Transverse colon (tissue), 4 donors: ENCODE measurements at regions of chr4 and their contacts with region 1.

Region 1: GRCh38 chr4:112031712-112032328 is 113.4 kb upstream of the FAM241A start:
- DNase-seq: peak; percentile 16
- H3K4me3 ChIP-seq: no peak overlapping the region
- H3K27ac ChIP-seq: no peak overlapping the region
- H3K4me1 ChIP-seq: peaks cover 0 to 6% (median 0%) of the 10 kb centered on the region in 4 donors
- H3K27me3 ChIP-seq: peaks cover 12% of the 10 kb centered on the region
- CTCF ChIP-seq: peak; percentile 55 to 79 (median 64)
- EP300 ChIP-seq: no peak
- POLR2A ChIP-seq: no peak

Region 2: GRCh38 chr4:111631215-111631999 is 400.4 kb before region 1 on chr4:
- in situ Hi-C with region 1: loop called in 3 of 4 experiments (anchors 10 to 25 kb)
- intact Hi-C with region 1: no loop called
- DNase-seq: no peak
- H3K4me3 ChIP-seq: no peak overlapping the region
- H3K27ac ChIP-seq: no peak overlapping the region
- H3K4me1 ChIP-seq: no peaks in the 10 kb centered on the region
- H3K27me3 ChIP-seq: no peaks in the 10 kb centered on the region
- CTCF ChIP-seq: peak in 4 of 5 experiments; percentile 11 to 27 (median 22)
- EP300 ChIP-seq: no peak
- POLR2A ChIP-seq: no peak

Region 3: GRCh38 chr4:111937368-111937767 is 94.5 kb before region 1 on chr4:
- in situ Hi-C with region 1: loop called in 2 of 4 experiments (anchors 10 kb)
- intact Hi-C with region 1: no loop called
- DNase-seq: no peak
- H3K4me3 ChIP-seq: no peak overlapping the region
- H3K27ac ChIP-seq: no peak overlapping the region
- H3K4me1 ChIP-seq: no peaks in the 10 kb centered on the region
- H3K27me3 ChIP-seq: peaks cover 8% of the 10 kb centered on the region
- CTCF ChIP-seq: peak in 2 of 5 experiments; percentile 8 to 20
- EP300 ChIP-seq: no peak
- POLR2A ChIP-seq: no peak

Region 4: DNA sequence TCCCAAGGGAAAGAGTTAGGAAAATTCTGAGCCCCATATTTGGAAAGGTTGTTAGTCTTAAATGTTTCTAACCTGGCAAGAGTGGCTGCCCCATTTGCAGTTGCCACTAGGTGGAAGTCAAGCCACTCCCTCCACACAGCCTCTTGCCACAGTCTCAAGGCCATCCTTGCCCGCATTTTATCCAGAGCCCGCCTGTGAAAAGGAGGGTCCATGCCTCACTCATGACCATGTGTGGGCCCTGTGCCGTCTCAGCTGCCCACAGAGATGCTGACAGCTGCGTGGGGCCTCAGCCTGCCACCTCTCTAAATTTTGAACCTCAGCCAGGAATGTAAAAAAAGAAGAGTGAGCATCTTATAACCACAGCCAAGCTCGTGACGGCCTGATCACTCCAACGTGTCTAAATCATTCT is 88.0 kb before region 1 on chr4:
- in situ Hi-C with region 1: loop called in 2 of 4 experiments (anchors 10 kb)
- intact Hi-C with region 1: no loop called
- DNase-seq: peak; percentile 61
- H3K4me3 ChIP-seq: no peak overlapping the region
- H3K27ac ChIP-seq: no peak overlapping the region
- H3K4me1 ChIP-seq: no peaks in the 10 kb centered on the region
- H3K27me3 ChIP-seq: no peaks in the 10 kb centered on the region
- CTCF ChIP-seq: peak; percentile 53 to 80 (median 60)
- EP300 ChIP-seq: no peak
- POLR2A ChIP-seq: no peak

Region 5: DNA sequence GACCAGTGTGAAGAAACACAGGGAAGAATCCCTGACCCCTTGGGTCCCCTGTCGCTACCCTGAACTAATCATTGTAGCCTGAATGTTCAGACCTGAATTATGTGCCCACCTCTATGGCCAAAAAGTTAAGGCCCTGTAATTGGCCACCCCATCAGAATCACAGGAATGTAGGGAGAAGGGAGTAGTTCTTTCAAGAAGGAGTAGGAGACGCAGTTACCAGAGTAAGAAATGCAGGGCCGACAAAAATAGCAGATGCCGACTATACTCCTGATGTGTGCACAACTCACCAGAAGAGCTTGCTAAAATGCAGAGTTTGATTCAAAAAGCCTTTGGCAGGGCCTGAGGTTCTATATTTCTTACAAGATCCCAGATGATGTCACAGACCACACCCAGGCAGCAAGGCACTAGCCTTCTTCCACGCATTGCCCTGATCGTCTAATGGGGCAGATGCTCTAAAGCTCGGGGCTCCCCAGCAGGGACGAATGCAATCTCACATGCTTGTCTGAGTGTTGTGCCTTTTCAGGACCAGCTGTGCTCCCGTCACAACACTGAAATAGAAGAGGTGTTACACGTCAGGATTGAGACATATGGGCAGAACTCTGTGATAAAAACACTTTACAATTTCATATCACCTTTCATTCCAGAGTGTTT is 47.5 kb before region 1 on chr4:
- in situ Hi-C with region 1: no loop called
- intact Hi-C with region 1: no loop called
- DNase-seq: no peak
- H3K4me3 ChIP-seq: no peak overlapping the region
- H3K27ac ChIP-seq: no peak overlapping the region
- H3K4me1 ChIP-seq: peaks cover 0 to 9% (median 4%) of the 10 kb centered on the region in 4 donors
- H3K27me3 ChIP-seq: no peaks in the 10 kb centered on the region
- CTCF ChIP-seq: no peak
- EP300 ChIP-seq: no peak
- POLR2A ChIP-seq: no peak

Region 6: GRCh38 chr4:112007391-112007790 is 24.4 kb before region 1 on chr4:
- in situ Hi-C with region 1: no loop called
- intact Hi-C with region 1: no loop called
- DNase-seq: no peak
- H3K4me3 ChIP-seq: no peak overlapping the region
- H3K27ac ChIP-seq: no peak overlapping the region
- H3K4me1 ChIP-seq: peaks cover 0 to 3% (median 0%) of the 10 kb centered on the region in 4 donors
- H3K27me3 ChIP-seq: no peaks in the 10 kb centered on the region
- CTCF ChIP-seq: no peak
- EP300 ChIP-seq: no peak
- POLR2A ChIP-seq: no peak

Region 7: GRCh38 chr4:112075129-112075753 is 43.4 kb after region 1 on chr4:
- in situ Hi-C with region 1: no loop called
- intact Hi-C with region 1: no loop called
- DNase-seq: peak; percentile 12
- H3K4me3 ChIP-seq: no peak overlapping the region
- H3K27ac ChIP-seq: no peak overlapping the region
- H3K4me1 ChIP-seq: no peaks in the 10 kb centered on the region
- H3K27me3 ChIP-seq: no peaks in the 10 kb centered on the region
- CTCF ChIP-seq: peak; percentile 49 to 76 (median 66)
- EP300 ChIP-seq: no peak
- POLR2A ChIP-seq: no peak

Region 8: GRCh38 chr4:112302320-112303274 is 270.8 kb after region 1 on chr4:
- in situ Hi-C with region 1: no loop called
- intact Hi-C with region 1: no loop called
- DNase-seq: no peak
- H3K4me3 ChIP-seq: no peak overlapping the region
- H3K27ac ChIP-seq: no peak overlapping the region
- H3K4me1 ChIP-seq: peaks cover 3 to 21% (median 7%) of the 10 kb centered on the region in 4 donors
- H3K27me3 ChIP-seq: no peaks in the 10 kb centered on the region
- CTCF ChIP-seq: no peak
- EP300 ChIP-seq: no peak
- POLR2A ChIP-seq: no peak